B cell (primary cell): ENCODE measurements at regions of chr7 and their contacts with region 1.

Region 1: GRCh38 chr7:37181550-37181932 is 267.1 kb downstream of the ELMO1 start:
- DNase-seq: no peak
- ATAC-seq: no peak
- H3K4me3 ChIP-seq: no peak overlapping the region
- H3K4me3 Mint-ChIP-seq: no peak overlapping the region
- H3K27ac ChIP-seq: no peak overlapping the region
- H3K27ac Mint-ChIP-seq: no peak overlapping the region
- H3K4me1 ChIP-seq: no peaks in the 10 kb centered on the region
- H3K4me1 Mint-ChIP-seq: no peaks in the 10 kb centered on the region
- H3K27me3 ChIP-seq: no peaks in the 10 kb centered on the region
- H3K27me3 Mint-ChIP-seq: no peaks in the 10 kb centered on the region
- CTCF ChIP-seq: no peak

Region 2: DNA sequence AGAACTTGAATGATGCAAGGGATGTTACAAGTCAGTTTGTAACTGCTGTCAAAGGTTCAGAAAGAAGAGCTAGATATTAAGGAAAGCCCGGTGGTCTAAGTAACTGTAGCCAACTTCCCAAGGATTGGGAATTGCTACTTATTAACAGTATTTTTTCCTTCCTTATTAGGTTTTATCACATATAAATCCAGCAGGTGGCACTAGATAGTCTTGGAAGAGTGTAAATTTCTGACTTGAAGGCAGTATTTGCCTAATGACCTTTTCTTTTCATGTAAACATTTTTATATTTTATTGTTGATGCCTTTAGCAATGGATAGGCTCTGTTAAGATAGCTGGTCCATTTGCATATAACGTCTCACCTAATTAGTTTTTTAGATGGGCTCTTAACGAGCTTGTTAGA is 740.7 kb before region 1 on chr7:
- CTCF ChIA-PET with region 1: interaction called, 66 read pairs
- POLR2A ChIA-PET with region 1: no interaction called
- intact Hi-C with region 1: loop called (anchors 1 kb)
- DNase-seq: peak; percentile 29
- ATAC-seq: no peak
- H3K4me3 ChIP-seq: no peak overlapping the region
- H3K4me3 Mint-ChIP-seq: no peak overlapping the region
- H3K27ac ChIP-seq: no peak overlapping the region
- H3K27ac Mint-ChIP-seq: no peak overlapping the region
- H3K4me1 ChIP-seq: no peaks in the 10 kb centered on the region
- H3K4me1 Mint-ChIP-seq: no peaks in the 10 kb centered on the region
- H3K27me3 ChIP-seq: no peaks in the 10 kb centered on the region
- H3K27me3 Mint-ChIP-seq: no peaks in the 10 kb centered on the region
- CTCF ChIP-seq: peak; percentile 45

Region 3: GRCh38 chr7:36473454-36474282 is 707.9 kb before region 1 on chr7:
- CTCF ChIA-PET with region 1: interaction called, 13 read pairs
- POLR2A ChIA-PET with region 1: no interaction called
- intact Hi-C with region 1: no loop called
- DNase-seq: peak; percentile 13
- ATAC-seq: no peak
- H3K4me3 ChIP-seq: no peak overlapping the region
- H3K4me3 Mint-ChIP-seq: no peak overlapping the region
- H3K27ac ChIP-seq: no peak overlapping the region
- H3K27ac Mint-ChIP-seq: no peak overlapping the region
- H3K4me1 ChIP-seq: no peaks in the 10 kb centered on the region
- H3K4me1 Mint-ChIP-seq: no peaks in the 10 kb centered on the region
- H3K27me3 ChIP-seq: no peaks in the 10 kb centered on the region
- H3K27me3 Mint-ChIP-seq: peaks cover 4% of the 10 kb centered on the region
- CTCF ChIP-seq: no peak

Region 4: GRCh38 chr7:36478745-36479144 is 702.8 kb before region 1 on chr7:
- CTCF ChIA-PET with region 1: interaction called, 13 read pairs
- POLR2A ChIA-PET with region 1: no interaction called
- intact Hi-C with region 1: no loop called
- DNase-seq: no peak
- ATAC-seq: no peak
- H3K4me3 ChIP-seq: no peak overlapping the region
- H3K4me3 Mint-ChIP-seq: no peak overlapping the region
- H3K27ac ChIP-seq: no peak overlapping the region
- H3K27ac Mint-ChIP-seq: no peak overlapping the region
- H3K4me1 ChIP-seq: no peaks in the 10 kb centered on the region
- H3K4me1 Mint-ChIP-seq: no peaks in the 10 kb centered on the region
- H3K27me3 ChIP-seq: no peaks in the 10 kb centered on the region
- H3K27me3 Mint-ChIP-seq: no peaks in the 10 kb centered on the region
- CTCF ChIP-seq: no peak

Region 5: GRCh38 chr7:36487756-36488336 is 693.7 kb before region 1 on chr7:
- CTCF ChIA-PET with region 1: interaction called, 118 read pairs
- POLR2A ChIA-PET with region 1: no interaction called
- intact Hi-C with region 1: loop called (anchors 1 kb)
- DNase-seq: peak; percentile 58
- ATAC-seq: peak; percentile 36
- H3K4me3 ChIP-seq: no peak overlapping the region
- H3K4me3 Mint-ChIP-seq: no peak overlapping the region
- H3K27ac ChIP-seq: no peak overlapping the region
- H3K27ac Mint-ChIP-seq: no peak overlapping the region
- H3K4me1 ChIP-seq: no peaks in the 10 kb centered on the region
- H3K4me1 Mint-ChIP-seq: no peaks in the 10 kb centered on the region
- H3K27me3 ChIP-seq: no peaks in the 10 kb centered on the region
- H3K27me3 Mint-ChIP-seq: peaks cover 13% of the 10 kb centered on the region
- CTCF ChIP-seq: peak; percentile 76

Region 6: DNA sequence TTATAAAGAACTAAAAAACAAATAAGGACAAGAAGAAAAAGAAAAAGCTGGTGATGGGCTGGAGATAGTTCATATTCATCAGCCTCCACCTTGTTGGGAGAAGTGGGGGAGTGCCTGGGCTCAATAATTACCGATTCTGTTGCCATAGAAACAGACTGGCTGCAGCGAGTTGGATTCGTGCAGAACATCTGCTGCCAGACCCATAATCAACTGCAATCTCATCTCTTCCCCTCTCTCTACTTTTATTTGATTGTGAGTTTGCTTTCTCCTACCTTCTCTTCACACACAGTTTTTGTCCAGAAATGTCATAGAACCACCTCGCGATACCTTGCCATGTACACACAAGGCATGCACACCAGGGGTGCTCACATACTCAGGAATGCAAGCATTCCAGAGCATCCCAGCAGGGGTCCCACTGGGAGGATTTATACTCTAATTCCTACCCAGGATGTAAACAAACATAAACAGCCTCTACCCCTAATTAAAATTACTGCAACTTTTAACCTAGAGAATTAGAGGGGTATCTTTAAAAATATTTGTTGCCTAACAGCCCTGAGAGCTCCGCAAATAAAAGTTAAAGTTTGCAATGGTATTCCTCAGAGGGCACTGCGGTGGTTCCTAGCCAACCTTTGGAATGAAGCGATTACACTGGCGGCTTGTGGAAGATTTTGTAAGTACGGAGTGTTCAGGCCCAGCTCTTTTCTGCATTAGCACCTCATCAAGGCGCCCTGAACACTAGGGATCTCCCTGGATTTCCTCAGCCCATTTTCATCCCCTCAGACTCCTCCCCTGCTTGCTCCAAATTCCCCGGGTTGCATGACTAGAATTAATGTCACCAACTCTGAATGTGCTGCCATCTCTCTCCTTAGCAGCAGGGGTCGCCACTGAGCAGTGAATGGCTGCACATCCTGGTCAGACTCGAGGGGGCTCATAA is 194.8 kb before region 1 on chr7:
- CTCF ChIA-PET with region 1: interaction called, 34 read pairs
- POLR2A ChIA-PET with region 1: no interaction called
- intact Hi-C with region 1: loop called (anchors 2 kb)
- DNase-seq: peak; percentile 61
- ATAC-seq: peak; percentile 56
- H3K4me3 ChIP-seq: no peak overlapping the region
- H3K4me3 Mint-ChIP-seq: no peak overlapping the region
- H3K27ac ChIP-seq: no peak overlapping the region
- H3K27ac Mint-ChIP-seq: no peak overlapping the region
- H3K4me1 ChIP-seq: peaks cover 15 to 18% of the 10 kb centered on the region in 2 donors
- H3K4me1 Mint-ChIP-seq: peaks cover 37% of the 10 kb centered on the region
- H3K27me3 ChIP-seq: no peaks in the 10 kb centered on the region
- H3K27me3 Mint-ChIP-seq: no peaks in the 10 kb centered on the region
- CTCF ChIP-seq: peak; percentile 88

Region 7: GRCh38 chr7:37201003-37201875 is 19.7 kb after region 1 on chr7:
- CTCF ChIA-PET with region 1: interaction called, 54 read pairs
- POLR2A ChIA-PET with region 1: no interaction called
- intact Hi-C with region 1: no loop called
- DNase-seq: peak; percentile 52
- ATAC-seq: peak; percentile 36
- H3K4me3 ChIP-seq: no peak overlapping the region
- H3K4me3 Mint-ChIP-seq: no peak overlapping the region
- H3K27ac ChIP-seq: no peak overlapping the region
- H3K27ac Mint-ChIP-seq: no peak overlapping the region
- H3K4me1 ChIP-seq: peaks cover 3 to 9% of the 10 kb centered on the region in 2 donors
- H3K4me1 Mint-ChIP-seq: peaks cover 25% of the 10 kb centered on the region
- H3K27me3 ChIP-seq: no peaks in the 10 kb centered on the region
- H3K27me3 Mint-ChIP-seq: no peaks in the 10 kb centered on the region
- CTCF ChIP-seq: peak; percentile 66

Region 8: DNA sequence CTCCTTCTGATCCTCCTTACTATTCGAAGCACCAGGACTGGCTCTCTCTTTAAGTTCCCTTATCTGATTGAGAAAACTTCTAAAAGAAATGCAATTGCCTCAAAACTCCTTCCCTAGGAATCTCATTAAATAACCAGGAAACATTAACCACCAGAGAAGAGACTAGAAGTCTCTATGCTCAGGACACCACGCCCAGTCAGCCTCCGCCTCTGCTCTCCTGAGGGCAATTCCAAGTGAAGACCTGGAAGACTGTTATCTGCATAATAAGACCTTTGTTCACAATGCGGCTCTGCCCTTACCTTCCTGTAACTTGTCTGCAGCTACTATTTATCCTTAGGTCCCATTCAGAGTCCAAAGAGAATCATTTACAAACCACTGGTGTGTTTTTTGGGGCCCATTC is 188.4 kb after region 1 on chr7:
- CTCF ChIA-PET with region 1: no interaction called
- POLR2A ChIA-PET with region 1: no interaction called
- intact Hi-C with region 1: no loop called
- DNase-seq: no peak
- ATAC-seq: no peak
- H3K4me3 ChIP-seq: no peak overlapping the region
- H3K4me3 Mint-ChIP-seq: no peak overlapping the region
- H3K27ac ChIP-seq: no peak overlapping the region
- H3K27ac Mint-ChIP-seq: no peak overlapping the region
- H3K4me1 ChIP-seq: no peaks in the 10 kb centered on the region
- H3K4me1 Mint-ChIP-seq: peaks cover 15% of the 10 kb centered on the region
- H3K27me3 ChIP-seq: no peaks in the 10 kb centered on the region
- H3K27me3 Mint-ChIP-seq: no peaks in the 10 kb centered on the region
- CTCF ChIP-seq: no peak